ENCODE measurements at regions of chr11 and their contacts with region 1.

Region 1: GRCh38 chr11:86456052-86456939 is 81.6 kb downstream of the CCDC81 start:
- DNase-seq: peak; percentile 74 to 82 (median 79)
- ATAC-seq: peak; percentile 89 to 97 (median 91)
- H3K4me3 ChIP-seq: no peak overlapping the region
- H3K27ac ChIP-seq: no peak overlapping the region
- H3K4me1 ChIP-seq: no peaks in the 10 kb centered on the region
- H3K27me3 ChIP-seq: no peaks in the 10 kb centered on the region
- CTCF ChIP-seq: peak; percentile 89 to 97 (median 92)
- POLR2A ChIP-seq: no peak

Region 2: DNA sequence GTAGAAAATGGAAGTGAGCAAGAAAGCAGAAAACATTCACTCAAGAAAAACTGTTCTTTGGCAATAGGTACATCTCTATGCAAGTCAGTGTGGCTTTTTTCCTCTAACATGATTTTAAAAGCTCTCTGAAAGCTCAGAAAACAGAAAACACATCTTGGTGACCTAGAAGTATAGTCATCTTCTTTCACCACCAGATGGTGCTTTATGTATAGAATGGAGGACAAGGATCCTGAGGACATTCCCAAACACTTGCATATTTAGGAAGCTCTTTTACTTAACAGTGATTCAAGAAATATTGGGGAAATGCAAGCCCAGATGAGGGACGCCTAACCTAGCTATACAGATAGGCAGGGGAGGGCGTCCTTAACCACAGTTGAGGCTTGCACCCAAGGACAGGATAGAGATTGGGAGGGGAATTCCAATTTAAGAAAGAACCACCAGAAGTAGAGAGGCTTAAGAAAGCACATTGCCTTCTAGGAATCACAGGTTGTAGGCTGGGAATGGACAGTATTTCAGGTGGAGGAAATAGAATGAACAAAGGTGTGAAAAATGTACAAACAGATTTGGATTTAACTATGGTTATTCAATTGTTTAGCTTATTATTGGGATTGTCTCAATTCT is 95.4 kb before region 1 on chr11:
- intact Hi-C with region 1: no loop called
- DNase-seq: no peak
- ATAC-seq: no peak
- H3K4me3 ChIP-seq: no peak overlapping the region
- H3K27ac ChIP-seq: no peak overlapping the region
- H3K4me1 ChIP-seq: no peaks in the 10 kb centered on the region
- H3K27me3 ChIP-seq: no peaks in the 10 kb centered on the region
- CTCF ChIP-seq: peak in 1 of 4 donors; percentile 15
- POLR2A ChIP-seq: no peak

Region 3: GRCh38 chr11:86610559-86611341 is 154.5 kb after region 1 on chr11:
- intact Hi-C with region 1: loop called in 1 of 2 experiments (anchors 10 kb)
- DNase-seq: no peak
- ATAC-seq: no peak
- H3K4me3 ChIP-seq: no peak overlapping the region
- H3K27ac ChIP-seq: no peak overlapping the region
- H3K4me1 ChIP-seq: peaks cover 0 to 4% (median 0%) of the 10 kb centered on the region in 4 donors
- H3K27me3 ChIP-seq: no peaks in the 10 kb centered on the region
- CTCF ChIP-seq: no peak
- POLR2A ChIP-seq: no peak

Region 4: DNA sequence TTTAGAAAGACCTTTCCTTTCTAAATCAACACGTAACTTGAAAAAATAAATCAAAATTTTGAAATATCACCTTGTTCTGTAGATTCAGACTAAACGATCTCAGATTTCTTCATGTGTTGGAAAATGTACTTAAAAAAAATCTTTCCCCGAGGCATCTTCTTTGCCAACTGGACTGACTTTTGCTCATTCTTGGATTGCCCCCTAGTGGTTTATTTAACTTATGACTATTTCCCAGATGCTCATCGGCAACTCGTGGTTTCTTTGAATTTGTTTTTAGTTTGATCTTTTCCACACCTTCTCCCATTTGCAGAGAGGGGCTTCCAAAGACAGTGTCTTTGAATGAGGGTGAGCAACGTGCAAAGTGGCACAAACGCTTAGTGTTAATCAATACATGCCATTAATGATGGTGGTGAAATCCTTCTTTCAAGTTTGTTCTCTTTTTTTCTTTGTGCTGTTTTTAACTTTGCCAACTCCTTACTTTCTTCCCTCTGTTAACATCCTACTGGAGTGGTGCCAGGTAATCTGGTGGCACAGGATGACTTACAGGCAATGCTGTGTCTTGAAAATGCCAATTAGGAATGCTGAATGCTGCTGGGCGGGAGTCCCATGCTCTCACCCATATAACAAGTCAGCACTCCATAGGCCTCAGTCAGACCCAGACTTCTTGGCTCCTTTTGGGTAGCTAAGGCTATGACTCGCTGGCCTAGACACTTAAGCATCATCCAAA is 362.3 kb after region 1 on chr11:
- intact Hi-C with region 1: loop called in 1 of 2 experiments (anchors 5 kb)
- DNase-seq: no peak
- ATAC-seq: peak; percentile 61 to 87 (median 81)
- H3K4me3 ChIP-seq: no peak overlapping the region
- H3K27ac ChIP-seq: no peak overlapping the region
- H3K4me1 ChIP-seq: no peaks in the 10 kb centered on the region
- H3K27me3 ChIP-seq: no peaks in the 10 kb centered on the region
- CTCF ChIP-seq: peak; percentile 68 to 80 (median 76)
- POLR2A ChIP-seq: no peak

Measured in right lobe of liver (tissue), 6 donors.